ENCODE measurements at regions of chr9 and their contacts with region 1.

Region 1: DNA sequence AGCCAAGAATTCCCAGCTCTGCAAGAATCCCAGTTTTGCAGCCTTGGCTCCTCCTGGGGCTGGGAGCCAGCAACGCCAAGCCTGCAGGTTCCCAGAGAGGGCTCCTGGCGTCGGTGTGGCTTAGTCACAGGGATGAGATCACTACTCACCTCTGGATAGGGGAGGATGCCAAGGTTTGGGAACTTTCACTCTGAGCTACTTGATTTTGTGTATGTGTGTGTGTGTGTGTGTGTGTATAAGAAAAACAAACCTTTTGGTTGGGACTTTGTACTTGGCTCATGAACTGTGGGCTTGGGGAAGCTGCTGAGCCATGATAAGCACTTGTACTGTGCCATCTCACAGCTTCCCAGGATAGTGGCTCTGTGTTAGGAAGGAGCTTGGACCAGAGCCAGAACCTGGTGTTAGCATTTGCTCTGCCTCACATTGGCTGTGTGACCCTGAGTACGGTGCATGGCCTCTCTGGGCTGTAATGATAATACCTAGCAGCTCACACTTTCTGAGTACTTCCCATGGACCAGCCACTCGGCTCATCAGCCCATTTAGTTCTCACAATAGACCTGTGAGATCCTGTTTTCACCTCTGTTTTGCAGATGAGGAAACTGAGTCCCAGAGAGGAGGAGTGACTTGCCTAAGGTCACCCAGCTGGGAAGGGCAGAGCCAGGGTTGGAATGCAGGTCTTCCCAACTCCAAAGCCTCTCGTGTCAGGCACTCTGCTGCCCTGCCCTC is 41.4 kb upstream of the DAB2IP start:
- DNase-seq: peak in 6 of 10 donors; percentile 29 to 90 (median 62)

Region 2: DNA sequence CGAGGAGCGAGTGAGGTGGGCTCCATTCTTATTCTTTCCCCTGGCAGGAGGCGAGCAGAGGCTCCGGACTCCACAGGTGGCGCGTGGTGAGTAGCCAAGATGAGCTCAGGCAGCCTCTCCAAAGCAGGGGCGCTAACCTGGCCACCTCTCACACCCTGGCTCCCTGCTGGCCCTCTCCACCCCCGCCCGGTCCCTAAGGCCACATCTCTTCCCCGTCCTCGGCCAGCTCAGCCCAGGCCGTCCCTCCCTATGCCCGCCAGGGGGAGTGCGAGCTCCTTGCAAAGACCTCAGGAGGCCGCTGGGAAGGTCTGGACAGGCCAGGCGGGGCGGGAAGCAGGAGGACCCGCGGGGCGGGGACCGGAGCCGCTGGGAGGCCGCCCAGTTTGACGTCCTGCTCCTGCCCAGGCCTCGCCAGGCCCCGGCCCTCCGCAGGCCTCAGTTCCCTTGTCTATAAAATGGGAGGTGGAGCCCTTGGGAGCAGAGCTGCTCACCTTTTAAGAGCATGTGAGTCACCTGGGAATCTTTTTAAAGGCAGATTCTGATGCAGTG is 64.1 kb before region 1 on chr9:
- intact Hi-C with region 1: loop called (anchors 10 kb)
- DNase-seq: peak; percentile 79 to 99 (median 94)

Region 3: GRCh38 chr9:121839726-121840500 is 229.9 kb after region 1 on chr9:
- intact Hi-C with region 1: no loop called
- DNase-seq: no peak